Panc1 (cell line): ENCODE measurements at regions of chr9 and their contacts with region 1.

Region 1: GRCh38 chr9:127578955-127579853 is 32.9 kb upstream of the STXBP1 start:
- DNase-seq: peak; percentile 82
- ATAC-seq: peak; percentile 91
- H3K4me3 ChIP-seq: peak overlapping the region; percentile 33 to 44
- H3K27ac ChIP-seq: peak overlapping the region; percentile 89
- H3K4me1 ChIP-seq: peaks cover 23% of the 10 kb centered on the region
- H3K27me3 ChIP-seq: no peaks in the 10 kb centered on the region
- CTCF ChIP-seq: peak; percentile 67

Region 2: DNA sequence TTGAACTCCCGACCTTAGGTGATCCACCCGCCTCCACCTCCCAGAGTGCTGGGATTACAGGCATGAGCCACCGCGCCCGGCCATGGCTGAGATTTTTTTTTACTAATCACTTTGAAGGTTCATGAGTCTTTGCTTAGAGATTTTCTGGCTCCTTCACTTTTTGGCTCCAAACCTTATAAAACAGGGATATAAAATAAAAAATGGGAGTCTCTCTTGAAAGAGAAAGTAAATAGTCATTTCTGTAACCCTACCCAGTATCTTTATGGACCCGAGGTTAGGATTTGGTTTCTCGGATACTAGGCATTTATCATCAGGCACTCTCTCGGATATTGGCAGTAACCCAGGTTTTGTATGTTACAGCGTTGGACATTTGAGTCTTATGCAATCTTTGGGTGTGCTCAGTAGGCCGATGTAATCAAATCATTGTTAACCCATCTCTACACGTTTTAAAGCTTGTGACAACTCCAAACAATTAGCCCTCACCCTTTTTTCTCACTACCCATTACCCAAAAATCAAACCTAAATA is 58.2 kb after region 1 on chr9:
- CTCF ChIA-PET with region 1: interaction called, 11 read pairs
- POLR2A ChIA-PET with region 1: no interaction called
- in situ Hi-C with region 1: no loop called
- intact Hi-C with region 1: no loop called
- DNase-seq: no peak
- ATAC-seq: no peak
- H3K4me3 ChIP-seq: no peak overlapping the region
- H3K27ac ChIP-seq: no peak overlapping the region
- H3K4me1 ChIP-seq: no peaks in the 10 kb centered on the region
- H3K27me3 ChIP-seq: no peaks in the 10 kb centered on the region
- CTCF ChIP-seq: no peak